CD14-positive monocyte (primary cell): ENCODE measurements at regions of chr3 and their contacts with region 1.

Region 1: DNA sequence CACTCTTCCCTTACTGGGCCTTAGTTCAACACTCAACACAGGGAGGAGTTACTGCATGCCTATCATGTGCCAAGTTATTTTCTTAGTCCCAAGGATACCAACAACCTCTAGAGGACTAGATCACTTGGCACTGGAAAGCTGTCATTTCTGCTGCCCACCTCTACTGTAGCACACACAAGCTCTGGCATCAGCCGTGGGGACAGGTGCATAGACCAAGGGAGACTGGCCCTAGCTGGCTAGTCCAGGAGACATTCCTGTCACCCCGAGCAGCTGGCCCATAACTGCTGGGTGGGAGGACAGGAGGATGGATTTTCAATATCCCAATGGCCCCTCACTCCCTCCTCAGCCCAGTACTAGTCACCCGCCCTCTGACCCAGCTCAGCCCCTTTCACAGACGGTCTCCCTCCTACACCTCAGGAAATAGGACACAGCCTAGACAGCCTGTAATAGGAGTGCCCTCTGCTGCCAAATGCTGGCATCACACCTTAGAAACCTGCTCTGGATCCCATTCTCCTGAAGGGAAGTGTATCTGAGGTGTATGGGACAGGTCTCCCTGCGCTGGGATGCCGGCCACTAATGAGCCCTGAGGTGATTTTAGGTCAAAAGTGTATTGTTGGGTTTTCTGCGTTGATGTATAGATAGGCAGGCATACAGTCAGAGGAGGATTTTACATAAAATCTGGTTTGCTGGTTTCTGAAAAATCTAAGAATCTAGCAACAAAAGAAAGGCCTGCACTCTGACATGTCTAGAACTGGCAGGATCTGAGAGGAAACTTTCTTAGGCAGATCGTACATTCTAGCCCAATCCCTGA is 3.4 kb upstream of the DZIP1L start:
- DNase-seq: peak in 2 of 3 donors; percentile 59 to 66
- H3K4me3 ChIP-seq: no peak overlapping the region
- H3K4me3 Mint-ChIP-seq: peak overlapping the region in 1 of 2 donors; percentile 31
- H3K27ac ChIP-seq: no peak overlapping the region
- H3K27ac Mint-ChIP-seq: peak overlapping the region in 2 of 7 donors; percentile 56 to 58
- H3K4me1 ChIP-seq: peaks cover 14 to 22% of the 10 kb centered on the region in 2 donors
- H3K4me1 Mint-ChIP-seq: peaks cover 19% of the 10 kb centered on the region
- H3K27me3 ChIP-seq: no peaks in the 10 kb centered on the region
- H3K27me3 Mint-ChIP-seq: peaks cover 0 to 1% (median 1%) of the 10 kb centered on the region in 3 donors
- CTCF ChIP-seq: peak; percentile 84

Region 2: DNA sequence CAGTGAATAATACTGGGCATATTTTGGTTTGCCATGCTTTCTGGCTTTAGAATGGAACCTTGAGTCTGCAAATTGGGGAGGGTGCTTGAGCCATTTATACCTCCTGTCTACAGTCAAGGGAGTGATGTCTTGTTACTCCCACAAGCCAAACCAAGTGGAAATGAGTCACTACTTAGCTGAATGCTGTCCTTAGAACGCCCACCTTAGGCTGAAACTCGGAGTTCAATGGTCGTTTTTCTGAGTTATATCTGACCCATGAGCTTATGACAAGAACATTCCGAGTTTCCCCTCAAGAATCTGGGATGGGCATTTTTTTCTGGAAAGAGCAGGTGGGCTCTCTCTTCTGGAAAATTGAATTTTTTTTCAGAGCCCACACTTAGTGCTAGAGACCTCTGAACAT is 126.2 kb before region 1 on chr3:
- intact Hi-C with region 1: no loop called
- DNase-seq: no peak
- H3K4me3 ChIP-seq: no peak overlapping the region
- H3K4me3 Mint-ChIP-seq: no peak overlapping the region
- H3K27ac ChIP-seq: no peak overlapping the region
- H3K27ac Mint-ChIP-seq: no peak overlapping the region
- H3K4me1 ChIP-seq: no peaks in the 10 kb centered on the region
- H3K4me1 Mint-ChIP-seq: no peaks in the 10 kb centered on the region
- H3K27me3 ChIP-seq: no peaks in the 10 kb centered on the region
- H3K27me3 Mint-ChIP-seq: peaks cover 1 to 7% (median 5%) of the 10 kb centered on the region in 3 donors
- CTCF ChIP-seq: no peak

Region 3: GRCh38 chr3:138068579-138069174 is 50.1 kb before region 1 on chr3:
- intact Hi-C with region 1: loop called in 1 of 2 experiments (anchors 5 kb)
- DNase-seq: peak; percentile 56 to 76 (median 67)
- H3K4me3 ChIP-seq: no peak overlapping the region
- H3K4me3 Mint-ChIP-seq: no peak overlapping the region
- H3K27ac ChIP-seq: no peak overlapping the region
- H3K27ac Mint-ChIP-seq: no peak overlapping the region
- H3K4me1 ChIP-seq: no peaks in the 10 kb centered on the region
- H3K4me1 Mint-ChIP-seq: peaks cover 1% of the 10 kb centered on the region
- H3K27me3 ChIP-seq: no peaks in the 10 kb centered on the region
- H3K27me3 Mint-ChIP-seq: peaks cover 0 to 3% (median 0%) of the 10 kb centered on the region in 3 donors
- CTCF ChIP-seq: peak; percentile 96

Region 4: GRCh38 chr3:138329127-138329983 is 210.5 kb after region 1 on chr3 and contains the start of gene NME9:
- intact Hi-C with region 1: no loop called
- DNase-seq: peak; percentile 42 to 60 (median 48)
- H3K4me3 ChIP-seq: peak within 1 kb of the TSS; percentile 41 to 77 (median 42)
- H3K4me3 Mint-ChIP-seq: peak within 1 kb of the TSS; percentile 81 to 93
- H3K27ac ChIP-seq: no peak within 1 kb of the TSS
- H3K27ac Mint-ChIP-seq: peak within 1 kb of the TSS in 1 of 7 donors; percentile 84
- H3K4me1 ChIP-seq: peaks cover 15 to 17% of the 10 kb centered on the region in 2 donors
- H3K4me1 Mint-ChIP-seq: peaks cover 17% of the 10 kb centered on the region
- H3K27me3 ChIP-seq: peaks cover 2 to 16% of the 10 kb centered on the region in 2 donors
- H3K27me3 Mint-ChIP-seq: peaks cover 11 to 33% (median 31%) of the 10 kb centered on the region in 3 donors
- CTCF ChIP-seq: peak; percentile 33
- polyA plus RNA-seq, gene NME9: 0.04 TPM in 1 of 3 donors, not detected in the others